Left ventricle myocardium superior (tissue), 1 donor: ENCODE measurements at regions of chr11 and their contacts with region 1.

Region 1: DNA sequence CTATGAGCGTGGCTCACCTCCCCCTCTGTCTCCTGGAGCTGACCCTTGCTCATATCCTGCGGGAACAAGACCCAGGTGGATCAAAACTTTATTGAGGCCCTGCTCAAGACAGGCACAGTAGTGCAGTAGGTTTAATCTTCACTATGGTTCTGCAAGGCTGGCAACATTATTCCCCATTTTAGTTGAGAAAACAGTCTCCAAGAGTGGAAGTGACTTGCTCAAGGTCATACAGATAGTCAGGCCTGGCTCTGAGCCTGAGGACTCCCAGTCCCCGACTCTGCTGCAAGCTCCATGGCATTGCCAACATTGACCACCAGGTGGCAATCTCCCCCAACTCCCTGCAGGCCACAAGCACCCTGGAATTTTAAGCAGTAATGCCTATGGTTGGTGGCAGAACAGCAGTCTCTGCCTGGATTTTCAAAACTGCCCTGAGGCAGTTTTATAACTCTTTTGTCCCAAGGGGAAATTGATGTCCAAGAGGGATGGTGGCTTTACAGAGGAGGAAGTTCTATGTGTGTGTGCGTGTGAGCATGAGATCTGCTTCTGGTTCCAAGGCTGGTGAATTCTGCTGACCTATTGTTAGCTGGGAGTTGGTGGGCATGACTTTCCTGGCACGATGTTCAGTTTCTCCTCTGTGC is 34.1 kb downstream of the NEU3 start:
- DNase-seq: peak; percentile 82
- ATAC-seq: peak; percentile 90

Region 2: GRCh38 chr11:75241036-75241905 is 218.4 kb after region 1 on chr11:
- intact Hi-C with region 1: loop called (anchors 10 kb)
- DNase-seq: peak; percentile 92
- ATAC-seq: peak; percentile 97